WTC11 (cell line): ENCODE measurements at regions of chr4 and their contacts with region 1.

Region 1: DNA sequence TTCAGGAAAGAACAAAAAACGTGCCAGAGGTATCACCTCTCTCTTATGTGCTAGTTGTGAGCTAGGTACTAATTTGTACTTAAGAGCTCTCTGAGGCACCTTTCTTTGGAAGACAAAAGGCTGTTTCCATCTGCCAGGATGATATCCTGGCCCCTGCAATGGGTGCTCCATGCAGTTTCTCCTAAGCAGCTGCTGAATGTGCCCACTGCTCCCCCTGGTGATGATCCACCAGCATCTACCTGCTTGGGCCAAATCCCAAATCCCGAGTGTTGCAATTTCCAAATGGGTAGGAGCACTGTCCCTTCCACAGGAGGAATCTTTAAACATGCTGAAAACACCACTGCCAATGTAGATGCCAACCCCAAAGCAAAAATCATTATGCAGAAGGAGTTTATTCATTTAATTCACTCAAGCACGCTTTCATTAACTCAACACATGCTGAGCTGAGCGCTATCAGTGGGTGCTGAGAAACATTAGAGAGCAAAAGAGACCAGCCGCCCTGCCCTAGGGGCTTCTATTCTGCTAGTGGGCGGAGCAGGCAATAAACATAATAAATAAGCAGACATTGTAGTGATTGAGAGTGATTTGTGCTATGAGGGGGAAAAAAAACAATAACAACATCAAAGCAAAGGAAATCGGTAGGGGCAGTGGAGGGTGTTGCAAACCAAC is 69.6 kb upstream of the C4orf50 start:
- DNase-seq: peak; percentile 74
- ATAC-seq: peak; percentile 90
- H3K4me3 Mint-ChIP-seq: no peak overlapping the region
- H3K27ac Mint-ChIP-seq: no peak overlapping the region
- H3K4me1 Mint-ChIP-seq: peaks cover 26% of the 10 kb centered on the region
- H3K27me3 Mint-ChIP-seq: peaks cover 67% of the 10 kb centered on the region
- CTCF ChIP-seq: peak; percentile 40; the same call in 1 of the 2 replicates

Region 2: DNA sequence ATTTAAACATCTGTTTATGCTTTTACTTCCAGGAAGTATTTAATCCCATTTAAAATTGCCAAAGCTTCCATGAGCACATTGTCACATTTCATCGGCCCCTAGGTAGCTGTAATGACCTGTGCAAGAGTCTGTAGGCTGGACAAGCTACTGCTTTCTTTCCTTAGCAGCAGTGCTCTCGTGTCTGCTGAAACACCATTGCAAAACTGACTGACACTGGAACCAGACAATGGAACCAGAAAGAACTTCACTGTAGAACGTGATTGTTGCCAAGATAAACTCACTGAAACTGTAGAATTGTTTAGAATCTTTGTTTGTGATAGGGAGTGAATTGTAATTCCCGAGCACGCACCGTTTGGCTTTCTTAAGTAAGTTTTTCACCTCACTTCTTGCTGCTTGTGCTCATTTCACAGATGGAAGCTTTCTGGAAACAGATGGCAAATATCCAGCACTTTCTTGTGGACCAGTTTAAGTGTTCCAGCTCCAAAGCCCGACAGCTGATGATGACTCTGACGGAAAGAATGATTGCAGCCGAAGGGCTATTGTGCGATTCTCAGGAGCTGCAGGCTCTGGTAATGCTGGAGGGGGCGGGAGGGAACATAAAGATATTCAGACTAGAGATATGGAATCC is 340.0 kb before region 1 on chr4:
- CTCF ChIA-PET with region 1: no interaction called
- POLR2A ChIA-PET with region 1: no interaction called
- DNase-seq: no peak
- ATAC-seq: no peak
- H3K4me3 Mint-ChIP-seq: no peak overlapping the region
- H3K27ac Mint-ChIP-seq: no peak overlapping the region
- H3K4me1 Mint-ChIP-seq: peaks cover 29% of the 10 kb centered on the region
- H3K27me3 Mint-ChIP-seq: no peaks in the 10 kb centered on the region; the same call in 1 of the 2 replicates
- CTCF ChIP-seq: no peak

Region 3: DNA sequence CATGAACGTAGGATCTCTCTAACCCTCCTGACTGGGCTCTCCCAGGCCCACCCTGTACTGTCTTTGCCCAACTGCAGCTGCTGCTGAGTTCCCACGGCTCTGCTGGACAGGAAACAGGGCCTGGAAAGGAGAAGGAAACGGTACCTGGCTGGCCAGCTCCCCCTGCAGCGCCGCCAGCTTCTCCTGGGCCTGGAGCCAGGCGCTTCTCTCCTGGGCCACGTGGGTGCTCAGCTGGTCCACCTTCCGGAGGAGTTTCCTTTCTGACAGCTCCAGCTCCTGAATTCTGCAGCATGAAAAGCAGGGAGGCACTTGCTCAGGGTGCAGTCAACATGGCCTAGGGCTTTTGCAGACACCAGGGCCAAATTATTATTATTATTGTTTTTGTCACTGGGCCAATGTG is 76.1 kb before region 1 on chr4:
- CTCF ChIA-PET with region 1: interaction called, 13 read pairs
- POLR2A ChIA-PET with region 1: no interaction called
- DNase-seq: no peak
- ATAC-seq: no peak
- H3K4me3 Mint-ChIP-seq: no peak overlapping the region
- H3K27ac Mint-ChIP-seq: no peak overlapping the region
- H3K4me1 Mint-ChIP-seq: peaks cover 14% of the 10 kb centered on the region
- H3K27me3 Mint-ChIP-seq: peaks cover 29% of the 10 kb centered on the region
- CTCF ChIP-seq: no peak

Region 4: DNA sequence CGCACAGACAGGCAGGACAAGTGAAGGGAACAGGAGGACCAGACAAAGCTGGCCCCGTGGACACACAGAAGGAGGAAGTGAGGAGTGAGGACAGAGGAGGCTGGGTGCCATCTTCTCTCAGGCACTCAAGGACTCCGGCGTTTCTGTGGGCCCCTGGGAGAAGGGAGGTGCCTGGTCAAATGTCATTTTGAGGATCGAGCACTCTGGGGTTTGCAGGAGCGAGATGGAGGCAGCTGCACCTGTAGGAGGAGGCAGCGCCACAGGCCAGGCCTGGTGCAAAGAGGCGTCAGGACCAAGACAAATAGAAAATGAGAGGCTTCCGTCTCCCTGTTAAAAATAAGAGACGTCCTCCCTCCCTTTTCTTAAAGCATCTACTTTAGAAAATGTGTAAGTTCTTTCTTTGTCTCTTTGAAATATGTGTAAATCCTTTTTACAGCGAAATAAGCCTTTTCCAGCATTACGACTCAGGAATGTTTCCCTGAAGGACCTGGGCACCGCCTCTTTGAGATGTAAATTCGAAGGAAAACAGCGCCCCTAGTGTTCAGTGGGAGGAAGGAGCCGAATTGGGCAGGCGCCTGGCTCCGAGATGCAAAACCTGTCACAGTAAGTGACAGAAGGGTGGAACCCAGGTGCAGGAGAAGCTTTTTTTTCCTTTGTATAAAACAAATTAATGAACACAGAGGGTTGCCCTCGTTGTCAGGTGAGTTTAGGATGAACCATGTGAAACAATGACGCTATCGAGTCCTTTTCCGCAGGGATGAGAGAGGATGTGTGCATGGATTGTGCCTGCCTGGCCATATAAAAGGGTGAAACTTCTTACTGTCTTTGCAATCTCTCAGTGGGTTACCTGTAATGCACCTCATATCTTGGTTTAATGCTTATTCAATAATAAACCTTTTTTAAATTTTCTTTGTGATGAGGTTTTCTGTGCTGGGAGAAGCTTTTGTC is 68.2 kb before region 1 on chr4:
- CTCF ChIA-PET with region 1: interaction called, 11 read pairs
- POLR2A ChIA-PET with region 1: no interaction called
- DNase-seq: peak; percentile 76
- ATAC-seq: peak; percentile 85
- H3K4me3 Mint-ChIP-seq: peak overlapping the region; percentile 1; the same call in 1 of the 2 replicates
- H3K27ac Mint-ChIP-seq: no peak overlapping the region; the same call in 1 of the 2 replicates
- H3K4me1 Mint-ChIP-seq: peaks cover 14% of the 10 kb centered on the region
- H3K27me3 Mint-ChIP-seq: no peaks in the 10 kb centered on the region; the same call in 1 of the 2 replicates
- CTCF ChIP-seq: peak; percentile 86

Region 5: DNA sequence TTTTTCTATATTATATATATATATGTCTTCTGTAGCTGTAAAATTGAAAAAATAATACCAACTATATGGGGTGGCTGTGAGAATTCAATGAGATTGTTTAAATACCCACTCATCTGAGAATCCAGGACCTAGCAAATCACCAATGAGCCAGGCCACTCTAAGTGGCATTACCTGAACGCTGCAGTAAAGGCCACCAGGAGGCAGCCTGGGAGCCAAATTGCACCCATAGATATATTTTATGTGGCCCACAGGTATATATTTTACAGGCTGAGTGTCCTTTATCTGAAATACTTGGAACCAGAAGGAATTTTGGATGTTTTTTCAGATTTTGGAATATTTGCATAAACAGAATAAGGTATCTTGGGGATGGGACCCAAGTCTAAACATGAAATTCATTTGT is 11.4 kb before region 1 on chr4:
- CTCF ChIA-PET with region 1: interaction called, 12 read pairs
- POLR2A ChIA-PET with region 1: no interaction called
- DNase-seq: peak; percentile 43
- ATAC-seq: peak; percentile 62
- H3K4me3 Mint-ChIP-seq: no peak overlapping the region
- H3K27ac Mint-ChIP-seq: no peak overlapping the region
- H3K4me1 Mint-ChIP-seq: peaks cover 11% of the 10 kb centered on the region
- H3K27me3 Mint-ChIP-seq: no peaks in the 10 kb centered on the region
- CTCF ChIP-seq: peak; percentile 24; the same call in 1 of the 2 replicates

Region 6: DNA sequence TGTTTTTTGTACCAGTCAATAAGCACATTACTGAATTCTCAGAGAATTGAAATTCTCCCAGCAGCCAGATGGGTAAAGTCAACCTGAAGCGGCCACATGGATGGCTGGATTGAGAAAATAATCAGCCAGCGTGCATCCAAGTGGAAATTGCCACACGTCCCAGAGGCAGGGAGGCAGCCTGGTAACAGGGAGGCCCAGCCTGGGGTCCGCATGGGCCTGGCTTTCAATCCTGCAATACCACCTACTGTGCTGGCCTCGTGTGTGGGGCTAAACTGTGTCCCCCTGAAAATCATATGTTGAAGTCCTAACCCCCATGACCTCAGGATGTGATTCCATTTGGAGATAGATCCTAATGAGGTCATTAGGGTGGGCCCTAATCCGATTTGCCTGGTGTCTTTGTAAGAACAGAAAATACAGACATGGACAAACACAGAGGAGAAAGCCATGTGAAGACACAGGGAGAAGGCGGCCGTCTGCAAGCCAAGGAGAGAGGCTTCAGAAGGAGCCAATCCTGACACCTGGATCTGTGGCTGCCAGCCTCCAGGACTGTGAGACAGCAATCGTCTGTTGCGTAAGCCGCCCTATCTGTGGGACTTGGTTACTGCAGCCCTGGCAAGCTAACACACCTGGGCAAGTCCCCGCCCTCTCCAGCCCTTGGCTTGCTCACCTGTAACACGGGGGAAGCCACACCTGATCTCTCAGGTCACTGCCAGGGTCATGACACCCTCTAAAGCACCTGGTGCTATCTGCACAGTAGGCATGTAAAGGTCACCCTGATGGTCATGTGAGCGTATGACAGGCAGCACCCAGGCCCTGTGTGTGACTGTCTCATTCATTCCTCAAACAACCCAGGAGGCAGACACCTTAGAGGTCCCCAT is 22.3 kb after region 1 on chr4:
- CTCF ChIA-PET with region 1: interaction called, 13 read pairs
- POLR2A ChIA-PET with region 1: no interaction called
- DNase-seq: peak; percentile 85
- ATAC-seq: peak; percentile 99
- H3K4me3 Mint-ChIP-seq: no peak overlapping the region
- H3K27ac Mint-ChIP-seq: no peak overlapping the region
- H3K4me1 Mint-ChIP-seq: peaks cover 20% of the 10 kb centered on the region
- H3K27me3 Mint-ChIP-seq: peaks cover 11% of the 10 kb centered on the region
- CTCF ChIP-seq: peak; percentile 65; the same call in 1 of the 2 replicates